Activated CD4-positive, alpha-beta T cell treated with anti-CD3 and anti-CD28 coated beads for 36 hours (primary cell): ENCODE measurements at regions of chr12 and their contacts with region 1.

Region 1: DNA sequence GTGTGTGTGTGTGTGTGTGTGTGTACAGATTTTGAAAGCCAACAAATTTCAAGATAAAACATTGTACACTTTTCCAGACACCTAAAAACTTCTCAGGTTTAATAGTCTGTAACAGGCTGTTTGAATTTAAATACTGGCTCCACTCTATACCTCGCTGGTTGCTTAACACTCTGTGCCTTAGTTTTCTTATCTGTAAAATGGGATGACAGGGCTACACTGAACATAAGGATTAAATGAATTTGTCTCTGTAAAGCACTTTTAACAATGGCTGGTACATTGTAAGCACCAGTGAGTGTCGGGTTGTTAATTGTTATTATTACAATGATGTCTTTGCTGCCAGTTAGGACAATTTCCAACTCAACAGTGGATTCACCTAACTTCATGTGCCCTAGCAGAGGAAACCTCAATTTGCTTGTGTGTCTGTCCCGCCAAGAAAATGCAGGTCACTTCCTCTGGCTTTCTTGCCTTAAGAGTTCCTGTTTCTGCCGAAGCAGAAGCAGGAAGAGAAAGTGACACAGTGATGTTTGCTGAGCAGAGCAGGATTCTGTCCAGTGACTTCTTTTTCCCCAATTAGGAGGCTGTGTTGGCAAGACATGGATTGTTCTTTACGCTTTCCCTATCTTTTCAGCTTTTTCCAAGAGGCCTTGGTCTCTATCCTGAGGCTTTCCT is 154.0 kb upstream of the ATP2B1 start:
- DNase-seq: peak; percentile 45
- ATAC-seq: peak; percentile 40
- H3K4me3 Mint-ChIP-seq: peak overlapping the region; percentile 70
- H3K27ac Mint-ChIP-seq: peak overlapping the region; percentile 98
- H3K4me1 Mint-ChIP-seq: peaks cover 64% of the 10 kb centered on the region
- H3K27me3 Mint-ChIP-seq: no peaks in the 10 kb centered on the region

Region 2: GRCh38 chr12:89433634-89434033 is 429.0 kb before region 1 on chr12:
- CTCF ChIA-PET with region 1: no interaction called
- POLR2A ChIA-PET with region 1: no interaction called
- intact Hi-C with region 1: no loop called
- DNase-seq: no peak
- ATAC-seq: peak; percentile 44
- H3K4me3 Mint-ChIP-seq: no peak overlapping the region
- H3K27ac Mint-ChIP-seq: no peak overlapping the region
- H3K4me1 Mint-ChIP-seq: peaks cover 15% of the 10 kb centered on the region
- H3K27me3 Mint-ChIP-seq: no peaks in the 10 kb centered on the region

Region 3: GRCh38 chr12:89671469-89671868 is 191.2 kb before region 1 on chr12:
- CTCF ChIA-PET with region 1: no interaction called
- POLR2A ChIA-PET with region 1: no interaction called
- intact Hi-C with region 1: loop called in 1 of 2 experiments (anchors 5 kb)
- DNase-seq: no peak
- ATAC-seq: no peak
- H3K4me3 Mint-ChIP-seq: no peak overlapping the region
- H3K27ac Mint-ChIP-seq: peak overlapping the region; percentile 64
- H3K4me1 Mint-ChIP-seq: peaks cover 78% of the 10 kb centered on the region
- H3K27me3 Mint-ChIP-seq: no peaks in the 10 kb centered on the region

Region 4: DNA sequence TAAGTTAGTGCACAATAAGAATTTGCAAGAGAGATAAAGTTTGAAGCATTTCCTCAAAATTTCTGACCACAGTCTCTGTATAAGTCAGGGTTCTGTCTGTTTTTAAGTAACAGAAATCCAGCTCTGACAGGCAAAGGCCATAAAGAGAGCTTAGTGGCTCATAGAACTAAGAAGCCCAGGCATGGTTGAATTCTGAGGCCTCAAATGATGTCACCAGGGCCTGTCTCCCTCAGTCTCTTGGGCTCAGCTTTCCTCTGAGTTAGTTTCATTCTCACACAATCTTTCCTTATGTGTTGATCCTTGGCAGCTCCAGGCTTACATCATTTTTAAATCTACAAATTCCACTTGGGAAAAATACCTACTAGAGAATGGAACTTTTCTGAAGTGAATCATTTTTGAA is 19.4 kb after region 1 on chr12:
- CTCF ChIA-PET with region 1: interaction called, 5 read pairs
- POLR2A ChIA-PET with region 1: no interaction called
- intact Hi-C with region 1: loop called (anchors 1 kb)
- DNase-seq: peak; percentile 45
- ATAC-seq: peak; percentile 67
- H3K4me3 Mint-ChIP-seq: no peak overlapping the region
- H3K27ac Mint-ChIP-seq: peak overlapping the region; percentile 83
- H3K4me1 Mint-ChIP-seq: peaks cover 38% of the 10 kb centered on the region
- H3K27me3 Mint-ChIP-seq: no peaks in the 10 kb centered on the region

Region 5: GRCh38 chr12:90091021-90091651 is 228.5 kb after region 1 on chr12:
- CTCF ChIA-PET with region 1: no interaction called
- POLR2A ChIA-PET with region 1: no interaction called
- intact Hi-C with region 1: loop called in 1 of 2 experiments (anchors 5 kb)
- DNase-seq: peak; percentile 56
- ATAC-seq: peak; percentile 69
- H3K4me3 Mint-ChIP-seq: no peak overlapping the region
- H3K27ac Mint-ChIP-seq: no peak overlapping the region
- H3K4me1 Mint-ChIP-seq: peaks cover 20% of the 10 kb centered on the region
- H3K27me3 Mint-ChIP-seq: no peaks in the 10 kb centered on the region